Activated CD4-positive, alpha-beta T cell treated with anti-CD3 and anti-CD28 coated beads for 36 hours (primary cell): ENCODE measurements at regions of chr1 and their contacts with region 1.

Region 1: GRCh38 chr1:83508485-83509151 is 490.3 kb downstream of the TTLL7 start:
- DNase-seq: peak; percentile 57
- ATAC-seq: peak; percentile 96
- H3K4me3 Mint-ChIP-seq: peak overlapping the region; percentile 47
- H3K27ac Mint-ChIP-seq: peak overlapping the region; percentile 94
- H3K4me1 Mint-ChIP-seq: peaks cover 52% of the 10 kb centered on the region
- H3K27me3 Mint-ChIP-seq: no peaks in the 10 kb centered on the region

Region 2: GRCh38 chr1:83497563-83497962 is 11.1 kb before region 1 on chr1:
- CTCF ChIA-PET with region 1: interaction called, 14 read pairs
- POLR2A ChIA-PET with region 1: no interaction called
- intact Hi-C with region 1: no loop called
- DNase-seq: no peak
- ATAC-seq: no peak
- H3K4me3 Mint-ChIP-seq: no peak overlapping the region
- H3K27ac Mint-ChIP-seq: no peak overlapping the region
- H3K4me1 Mint-ChIP-seq: peaks cover 27% of the 10 kb centered on the region
- H3K27me3 Mint-ChIP-seq: no peaks in the 10 kb centered on the region

Region 3: GRCh38 chr1:83593073-83593472 is 84.5 kb after region 1 on chr1:
- CTCF ChIA-PET with region 1: no interaction called
- POLR2A ChIA-PET with region 1: no interaction called
- intact Hi-C with region 1: no loop called
- DNase-seq: no peak
- ATAC-seq: no peak
- H3K4me3 Mint-ChIP-seq: no peak overlapping the region
- H3K27ac Mint-ChIP-seq: no peak overlapping the region
- H3K4me1 Mint-ChIP-seq: peaks cover 16% of the 10 kb centered on the region
- H3K27me3 Mint-ChIP-seq: no peaks in the 10 kb centered on the region

Region 4: DNA sequence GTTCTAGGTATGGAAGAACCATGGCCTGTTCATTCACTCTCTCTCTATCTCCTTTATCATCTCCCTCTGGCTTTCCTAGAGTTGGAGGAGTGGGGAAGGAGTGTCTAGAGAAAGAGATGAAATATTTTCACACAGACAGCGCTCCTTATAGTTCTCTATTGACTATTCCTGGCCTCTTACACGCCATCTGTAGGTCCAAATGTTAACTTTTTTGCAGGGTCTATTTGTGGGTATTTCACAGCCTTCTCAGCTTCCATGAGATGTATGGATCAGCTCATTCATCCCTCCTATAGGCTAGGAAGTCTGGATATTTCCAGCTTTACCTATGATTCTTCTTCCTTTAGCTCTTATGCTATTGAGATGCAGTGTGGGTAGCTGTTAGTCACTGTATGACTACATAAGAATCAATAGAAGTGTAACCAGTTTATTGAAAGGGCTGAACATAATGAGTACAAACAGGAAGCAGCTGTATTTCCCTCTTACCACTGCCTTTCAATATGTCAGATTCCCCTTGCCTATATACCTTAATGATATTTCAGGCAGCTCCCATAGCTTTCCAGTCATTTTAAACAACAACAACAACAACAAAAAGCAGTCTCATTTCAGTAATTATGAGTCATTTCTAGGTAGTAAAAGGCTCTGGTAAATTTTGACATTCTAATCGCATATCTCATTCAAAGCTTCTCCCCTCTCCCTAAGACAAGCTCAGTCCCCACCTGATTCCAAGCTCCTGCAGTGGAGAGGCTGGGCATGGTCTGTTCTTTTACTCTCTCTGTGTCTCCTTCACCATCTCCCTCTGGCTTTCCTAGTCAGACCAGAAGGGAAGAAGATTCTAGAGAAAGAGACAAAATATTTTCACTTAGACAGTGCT is 340.8 kb after region 1 on chr1:
- CTCF ChIA-PET with region 1: no interaction called
- POLR2A ChIA-PET with region 1: no interaction called
- intact Hi-C with region 1: no loop called
- DNase-seq: no peak
- ATAC-seq: peak; percentile 85
- H3K4me3 Mint-ChIP-seq: no peak overlapping the region
- H3K27ac Mint-ChIP-seq: no peak overlapping the region
- H3K4me1 Mint-ChIP-seq: peaks cover 11% of the 10 kb centered on the region
- H3K27me3 Mint-ChIP-seq: no peaks in the 10 kb centered on the region

Region 5: DNA sequence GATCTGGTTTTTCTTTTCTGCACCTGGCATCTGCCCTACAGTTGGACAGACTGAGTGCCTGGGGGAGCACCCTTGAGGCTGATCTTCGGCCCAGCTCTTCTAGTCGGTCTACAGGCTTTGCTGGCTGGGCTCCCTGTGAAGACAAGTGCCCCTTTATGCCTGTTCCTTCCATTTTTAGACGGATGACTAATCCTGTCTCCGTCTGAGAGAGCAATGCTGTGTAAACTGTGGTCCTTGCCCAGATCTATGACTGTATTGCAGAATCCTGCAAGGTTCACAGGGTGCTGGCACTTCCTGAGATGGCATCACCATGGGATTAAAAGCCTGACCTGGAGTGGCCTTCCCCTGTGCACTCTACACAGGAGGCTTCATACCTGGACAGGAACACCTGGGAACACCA is 745.3 kb after region 1 on chr1:
- CTCF ChIA-PET with region 1: no interaction called
- POLR2A ChIA-PET with region 1: no interaction called
- intact Hi-C with region 1: no loop called
- DNase-seq: no peak
- ATAC-seq: no peak
- H3K4me3 Mint-ChIP-seq: no peak overlapping the region
- H3K27ac Mint-ChIP-seq: no peak overlapping the region
- H3K4me1 Mint-ChIP-seq: no peaks in the 10 kb centered on the region
- H3K27me3 Mint-ChIP-seq: no peaks in the 10 kb centered on the region